Transverse colon (tissue), 4 donors: ENCODE measurements at regions of chr10 and their contacts with region 1.

Region 1: DNA sequence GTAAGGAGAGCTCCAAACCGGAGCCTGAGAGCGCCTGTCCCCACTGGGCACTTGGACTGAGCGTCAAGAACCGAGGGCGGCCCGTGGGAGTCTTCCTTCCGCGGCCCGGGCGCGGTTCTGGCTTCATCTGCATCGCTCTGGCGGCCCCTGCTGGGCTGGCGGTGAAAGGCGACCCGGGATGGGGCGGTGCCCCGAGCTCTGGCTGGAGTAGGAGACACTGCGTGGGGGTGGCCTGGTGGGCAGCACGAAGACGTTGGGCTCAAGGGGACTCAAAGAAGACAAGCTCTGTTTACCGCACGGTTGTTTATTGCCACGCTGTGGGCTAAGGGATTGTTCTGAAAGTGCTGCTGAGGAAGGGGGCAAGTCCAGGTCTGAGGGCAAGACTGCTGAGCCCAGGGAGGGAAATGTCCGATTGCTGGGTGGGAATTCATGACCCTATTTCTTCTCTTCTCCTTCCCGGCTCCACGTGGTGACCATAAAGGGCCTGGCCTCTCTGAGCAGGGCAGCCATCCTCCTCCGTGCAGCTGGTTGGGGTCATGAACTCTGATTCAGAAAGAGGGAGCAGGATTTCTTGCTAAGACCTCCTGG is 29.8 kb downstream of the PLAU start:
- DNase-seq: peak; percentile 89
- H3K4me3 ChIP-seq: peak overlapping the region in 2 of 4 donors; percentile 9 to 47
- H3K27ac ChIP-seq: peak overlapping the region; percentile 57 to 67 (median 66)
- H3K4me1 ChIP-seq: peaks cover 0 to 9% (median 8%) of the 10 kb centered on the region in 4 donors
- H3K27me3 ChIP-seq: no peaks in the 10 kb centered on the region
- CTCF ChIP-seq: peak; percentile 92 to 95 (median 95)
- EP300 ChIP-seq: no peak
- POLR2A ChIP-seq: no peak

Region 2: GRCh38 chr10:72414642-72415041 is 1526.1 kb before region 1 on chr10:
- in situ Hi-C with region 1: no loop called
- intact Hi-C with region 1: no loop called
- DNase-seq: no peak
- H3K4me3 ChIP-seq: no peak overlapping the region
- H3K27ac ChIP-seq: no peak overlapping the region
- H3K4me1 ChIP-seq: no peaks in the 10 kb centered on the region
- H3K27me3 ChIP-seq: no peaks in the 10 kb centered on the region
- CTCF ChIP-seq: no peak
- EP300 ChIP-seq: no peak
- POLR2A ChIP-seq: no peak

Region 3: DNA sequence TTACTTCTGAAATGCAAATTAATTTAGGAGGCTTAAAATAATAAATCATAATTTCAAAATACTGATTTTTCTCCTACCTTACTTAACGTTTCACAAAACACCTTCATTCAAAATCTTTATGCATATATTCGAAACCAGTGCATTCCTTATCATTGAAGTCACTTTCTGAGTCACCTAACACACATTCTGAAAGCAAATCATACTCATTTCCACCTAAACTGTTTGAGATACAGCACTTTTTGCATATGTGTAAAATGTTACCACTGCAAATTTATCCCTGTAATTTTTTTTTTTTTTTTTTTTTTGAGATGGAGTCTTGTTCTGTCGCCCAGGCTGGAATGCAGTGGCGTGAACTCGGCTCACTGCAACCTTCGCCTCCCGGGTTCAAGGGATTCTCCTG is 460.6 kb before region 1 on chr10:
- in situ Hi-C with region 1: no loop called
- intact Hi-C with region 1: no loop called
- DNase-seq: no peak
- H3K4me3 ChIP-seq: no peak overlapping the region
- H3K27ac ChIP-seq: no peak overlapping the region
- H3K4me1 ChIP-seq: no peaks in the 10 kb centered on the region
- H3K27me3 ChIP-seq: no peaks in the 10 kb centered on the region
- CTCF ChIP-seq: no peak
- EP300 ChIP-seq: no peak
- POLR2A ChIP-seq: no peak

Region 4: DNA sequence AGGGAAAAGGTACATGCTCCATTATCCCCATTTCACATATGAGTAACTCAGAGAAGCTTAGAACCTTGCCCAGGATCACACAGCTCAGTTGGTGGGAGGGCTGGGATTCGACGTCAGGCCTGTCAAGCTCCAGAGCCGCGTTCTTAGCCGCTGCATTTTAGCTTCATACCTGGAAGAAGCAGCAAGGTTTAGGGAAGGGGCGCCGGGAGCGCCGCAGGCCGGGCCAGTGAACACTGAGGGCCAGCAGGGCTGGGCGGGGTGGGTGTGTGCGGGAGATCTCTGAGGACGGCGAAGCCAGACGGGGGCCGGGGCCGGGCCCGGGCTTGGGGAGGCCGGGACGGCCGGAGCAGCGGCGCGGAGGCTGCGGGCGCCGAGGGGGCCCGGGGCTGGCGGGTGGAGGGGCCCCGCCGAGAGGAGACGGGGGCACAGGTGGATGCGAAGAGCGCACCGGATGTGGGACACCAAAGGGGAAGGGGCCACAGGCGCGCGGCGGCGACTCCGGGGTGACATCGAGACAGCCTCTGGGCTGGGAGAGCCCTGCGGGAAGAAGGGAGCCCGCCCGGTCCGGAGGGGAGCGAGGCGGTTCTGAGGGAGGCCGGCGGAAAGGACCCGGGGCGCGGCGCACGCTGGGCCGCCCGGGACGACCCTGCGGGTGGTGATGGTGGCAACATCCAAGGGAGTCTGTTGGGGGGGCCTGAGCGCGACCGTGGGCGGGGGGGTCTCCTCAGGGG is 129.8 kb before region 1 on chr10:
- in situ Hi-C with region 1: no loop called
- intact Hi-C with region 1: no loop called
- DNase-seq: peak; percentile 48
- H3K4me3 ChIP-seq: peak overlapping the region; percentile 56 to 89 (median 78)
- H3K27ac ChIP-seq: peak overlapping the region; percentile 87 to 97 (median 91)
- H3K4me1 ChIP-seq: peaks cover 0 to 25% (median 8%) of the 10 kb centered on the region in 4 donors
- H3K27me3 ChIP-seq: no peaks in the 10 kb centered on the region
- CTCF ChIP-seq: no peak
- EP300 ChIP-seq: no peak
- POLR2A ChIP-seq: no peak

Region 5: DNA sequence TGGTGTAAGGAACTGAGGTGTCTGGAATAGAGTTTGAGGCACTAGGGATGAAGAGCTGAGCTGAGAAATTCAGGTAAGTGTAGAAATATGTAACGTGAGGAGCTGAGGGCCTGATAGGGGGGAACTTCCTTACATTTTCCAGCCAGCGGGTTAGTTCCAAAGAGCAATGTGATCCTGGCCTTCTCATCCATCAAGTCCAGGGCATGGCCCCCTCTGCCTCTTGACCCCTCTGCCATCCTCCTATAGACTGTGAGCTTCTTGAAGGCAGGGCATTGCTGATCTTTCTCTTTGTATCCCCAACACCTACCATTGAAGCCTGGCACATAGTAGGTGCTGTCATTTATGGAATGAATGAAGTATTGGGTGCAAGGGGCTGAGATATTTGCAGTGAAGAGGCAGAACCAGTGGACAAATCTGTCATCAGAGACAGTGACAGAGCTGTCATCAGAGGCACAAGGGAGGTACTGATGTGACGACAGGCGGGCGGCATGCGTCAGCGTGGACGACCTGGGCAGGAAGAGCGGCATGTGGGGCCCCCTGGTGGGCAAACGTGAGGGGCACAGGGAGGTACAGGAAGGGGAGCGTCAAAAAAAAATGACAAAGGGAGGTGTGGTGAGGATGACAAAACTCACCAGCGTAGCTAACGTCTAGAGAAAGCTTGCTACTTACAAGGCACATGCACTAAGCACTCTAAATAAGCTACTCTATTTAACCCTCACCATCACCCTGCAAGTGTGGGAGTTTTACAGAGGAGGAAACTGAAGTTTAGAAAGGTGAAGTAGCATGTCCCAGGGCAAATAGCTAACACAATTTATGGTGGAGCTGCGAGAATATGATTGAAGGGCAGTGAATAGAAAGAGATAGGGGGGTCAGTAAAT is 61.2 kb before region 1 on chr10:
- in situ Hi-C with region 1: loop called in 2 of 4 experiments (anchors 10 kb)
- intact Hi-C with region 1: no loop called
- DNase-seq: peak; percentile 93
- H3K4me3 ChIP-seq: no peak overlapping the region
- H3K27ac ChIP-seq: peak overlapping the region in 2 of 4 donors; percentile 30 to 33
- H3K4me1 ChIP-seq: peaks cover 4 to 18% (median 9%) of the 10 kb centered on the region in 4 donors
- H3K27me3 ChIP-seq: no peaks in the 10 kb centered on the region
- CTCF ChIP-seq: peak; percentile 90 to 99 (median 95)
- EP300 ChIP-seq: no peak
- POLR2A ChIP-seq: peak; percentile 7

Region 6: DNA sequence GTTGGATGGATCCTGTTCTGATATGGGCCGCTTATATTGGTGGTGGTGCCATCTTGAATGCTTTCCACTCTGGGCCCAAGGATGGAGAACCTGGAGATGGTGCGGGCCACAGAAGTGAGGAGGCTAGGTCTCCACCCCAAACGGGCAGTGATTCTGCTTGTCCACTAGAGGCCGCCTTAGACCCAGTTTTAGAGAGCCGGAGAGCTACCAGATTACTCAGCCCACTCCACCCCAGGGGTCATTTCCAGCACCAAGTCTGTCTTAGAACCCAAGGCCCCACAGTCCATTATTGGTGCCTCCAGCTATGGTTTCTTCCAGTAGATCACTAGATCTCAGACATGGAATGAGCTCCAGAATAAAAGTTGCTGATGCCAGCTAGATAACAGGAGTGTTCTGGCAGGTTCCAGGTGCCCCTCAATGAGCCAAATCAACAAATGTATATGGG is 54.6 kb before region 1 on chr10:
- in situ Hi-C with region 1: loop called (anchors 5 to 10 kb)
- intact Hi-C with region 1: loop called (anchors 2 kb)
- DNase-seq: peak; percentile 72
- H3K4me3 ChIP-seq: no peak overlapping the region
- H3K27ac ChIP-seq: peak overlapping the region; percentile 78 to 85 (median 82)
- H3K4me1 ChIP-seq: peaks cover 15 to 31% (median 29%) of the 10 kb centered on the region in 4 donors
- H3K27me3 ChIP-seq: no peaks in the 10 kb centered on the region
- CTCF ChIP-seq: peak; percentile 78 to 92 (median 85)
- EP300 ChIP-seq: no peak
- POLR2A ChIP-seq: no peak

Region 7: DNA sequence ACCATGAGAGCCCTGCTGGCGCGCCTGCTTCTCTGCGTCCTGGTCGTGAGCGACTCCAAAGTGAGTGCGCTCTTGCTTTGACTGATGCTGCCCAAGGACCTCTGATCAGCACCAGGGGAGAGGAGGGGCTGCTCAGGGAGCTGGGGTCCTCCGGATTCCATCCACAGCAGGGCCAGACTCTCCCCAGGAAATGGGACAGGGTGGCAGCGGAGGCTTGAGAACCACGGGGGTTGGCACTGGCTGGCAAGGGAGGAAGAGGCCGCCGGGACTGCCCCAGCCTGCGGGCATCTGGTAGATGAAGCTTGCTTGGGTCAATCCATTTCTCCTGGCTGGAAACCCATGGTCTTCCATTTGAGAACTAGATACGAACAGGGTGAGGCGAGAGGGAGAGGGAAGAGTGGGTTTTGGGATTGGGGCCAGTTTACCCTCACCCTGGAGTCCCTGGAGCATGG is 29.1 kb before region 1 on chr10:
- in situ Hi-C with region 1: no loop called
- intact Hi-C with region 1: loop called (anchors 1 kb)
- DNase-seq: no peak
- H3K4me3 ChIP-seq: peak overlapping the region; percentile 48 to 71 (median 58)
- H3K27ac ChIP-seq: peak overlapping the region; percentile 61 to 82 (median 76)
- H3K4me1 ChIP-seq: peaks cover 6 to 62% (median 43%) of the 10 kb centered on the region in 4 donors
- H3K27me3 ChIP-seq: peaks cover 15% of the 10 kb centered on the region
- CTCF ChIP-seq: no peak
- EP300 ChIP-seq: no peak
- POLR2A ChIP-seq: no peak

Region 8: DNA sequence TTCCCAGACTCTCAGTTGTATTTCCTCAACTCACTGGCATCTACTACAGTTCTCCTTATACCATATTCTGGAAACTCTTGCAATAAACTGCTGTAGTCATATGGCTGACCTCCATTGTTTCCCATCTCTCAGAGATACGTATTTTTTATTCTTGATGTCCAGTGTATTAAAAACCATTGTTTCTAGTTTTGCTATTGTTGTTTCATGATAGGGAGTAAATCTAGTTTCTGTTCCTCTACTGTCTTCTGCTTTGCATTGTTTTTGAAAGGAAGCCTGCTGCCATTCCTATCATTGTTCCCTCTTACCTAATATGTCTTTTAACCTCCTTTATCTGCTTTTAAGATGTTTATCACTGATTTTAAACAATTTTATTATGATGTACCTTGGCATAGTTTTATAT is 465.3 kb after region 1 on chr10:
- in situ Hi-C with region 1: no loop called
- intact Hi-C with region 1: no loop called
- DNase-seq: no peak
- H3K4me3 ChIP-seq: no peak overlapping the region
- H3K27ac ChIP-seq: no peak overlapping the region
- H3K4me1 ChIP-seq: no peaks in the 10 kb centered on the region
- H3K27me3 ChIP-seq: no peaks in the 10 kb centered on the region
- CTCF ChIP-seq: no peak
- EP300 ChIP-seq: no peak
- POLR2A ChIP-seq: no peak